GM10248 (cell line): ENCODE measurements at regions of chr21 and their contacts with region 1.

Region 1: DNA sequence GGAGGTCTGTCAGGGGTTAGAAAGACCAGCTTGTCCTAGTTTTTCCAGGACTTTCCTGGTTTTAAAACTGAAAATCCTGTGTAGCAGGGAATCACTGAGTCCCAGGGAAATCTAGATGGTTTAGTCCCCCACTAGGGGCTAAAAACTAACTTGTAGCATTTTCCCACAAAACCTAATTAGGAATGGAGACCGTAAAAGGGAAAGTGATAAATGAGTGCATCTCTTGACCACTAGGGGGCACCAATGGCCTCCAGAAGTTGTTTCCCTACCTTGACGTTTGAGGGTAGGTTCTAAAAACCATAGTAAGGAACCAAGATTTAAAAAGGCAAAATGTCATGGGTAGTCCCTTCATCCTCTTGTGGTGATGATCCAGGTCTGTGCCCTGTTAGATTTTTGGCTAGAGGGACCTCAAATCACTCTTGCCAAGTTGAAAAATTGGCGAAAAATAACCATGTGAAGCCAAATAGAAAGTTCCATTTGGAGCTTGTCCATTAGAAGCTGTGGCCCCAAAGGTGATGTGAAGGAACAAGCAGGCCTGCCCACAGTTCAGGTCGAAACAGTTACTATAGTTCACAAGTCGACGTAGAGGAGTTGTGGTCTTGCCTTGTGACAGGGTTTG is 24.5 kb downstream of the CLIC6 start:
- DNase-seq: peak; percentile 57
- CTCF ChIP-seq: peak; percentile 58

Region 2: DNA sequence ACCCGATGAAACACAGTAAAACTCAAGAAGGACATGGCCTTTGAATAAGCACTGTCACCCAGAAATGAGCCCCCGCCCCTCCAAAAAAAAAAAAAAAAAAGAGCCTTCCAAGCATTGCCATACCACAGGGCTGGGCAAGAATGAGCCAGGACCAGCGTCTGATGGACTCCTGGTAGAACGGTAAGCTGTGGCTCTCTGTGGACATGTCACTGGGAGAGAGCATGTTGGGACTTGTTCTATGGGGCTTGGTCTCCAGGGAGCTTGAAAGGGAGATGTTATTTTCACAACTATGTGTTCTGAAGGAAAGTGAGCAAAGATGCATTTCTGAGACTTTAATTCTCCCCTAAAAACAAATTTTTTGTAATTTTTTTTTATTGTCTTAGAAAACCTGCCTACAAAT is 18.1 kb before region 1 on chr21:
- CTCF ChIA-PET with region 1: interaction called, 13 read pairs
- POLR2A ChIA-PET with region 1: no interaction called
- DNase-seq: no peak
- CTCF ChIP-seq: no peak

Region 3: GRCh38 chr21:34707876-34708325 is 14.6 kb after region 1 on chr21:
- CTCF ChIA-PET with region 1: interaction called, 49 read pairs
- POLR2A ChIA-PET with region 1: no interaction called
- DNase-seq: peak; percentile 81
- CTCF ChIP-seq: no peak

Region 4: GRCh38 chr21:34722684-34723300 is 29.5 kb after region 1 on chr21:
- CTCF ChIA-PET with region 1: interaction called, 10 read pairs
- POLR2A ChIA-PET with region 1: no interaction called
- DNase-seq: peak; percentile 58
- CTCF ChIP-seq: peak; percentile 58

Region 5: DNA sequence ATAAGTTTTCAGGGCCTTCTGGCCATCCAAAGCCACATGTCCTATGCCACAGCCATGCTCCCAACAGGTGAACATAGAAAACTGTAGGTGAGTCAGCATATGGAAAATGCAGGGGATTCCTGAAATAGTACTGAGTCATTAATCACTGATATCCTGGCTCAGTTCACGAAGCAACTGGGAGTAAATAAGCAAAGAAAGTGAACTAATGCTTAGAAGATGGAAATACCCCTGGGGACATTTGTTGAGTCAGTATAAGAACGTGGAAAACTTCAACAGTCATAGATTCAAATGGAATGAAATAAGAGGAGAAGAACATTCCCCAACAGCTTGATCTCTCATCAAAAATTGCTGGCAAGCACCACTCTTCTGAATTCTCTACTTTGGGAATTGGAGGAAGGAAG is 504.7 kb after region 1 on chr21:
- CTCF ChIA-PET with region 1: no interaction called
- POLR2A ChIA-PET with region 1: no interaction called
- DNase-seq: no peak
- CTCF ChIP-seq: no peak

Region 6: DNA sequence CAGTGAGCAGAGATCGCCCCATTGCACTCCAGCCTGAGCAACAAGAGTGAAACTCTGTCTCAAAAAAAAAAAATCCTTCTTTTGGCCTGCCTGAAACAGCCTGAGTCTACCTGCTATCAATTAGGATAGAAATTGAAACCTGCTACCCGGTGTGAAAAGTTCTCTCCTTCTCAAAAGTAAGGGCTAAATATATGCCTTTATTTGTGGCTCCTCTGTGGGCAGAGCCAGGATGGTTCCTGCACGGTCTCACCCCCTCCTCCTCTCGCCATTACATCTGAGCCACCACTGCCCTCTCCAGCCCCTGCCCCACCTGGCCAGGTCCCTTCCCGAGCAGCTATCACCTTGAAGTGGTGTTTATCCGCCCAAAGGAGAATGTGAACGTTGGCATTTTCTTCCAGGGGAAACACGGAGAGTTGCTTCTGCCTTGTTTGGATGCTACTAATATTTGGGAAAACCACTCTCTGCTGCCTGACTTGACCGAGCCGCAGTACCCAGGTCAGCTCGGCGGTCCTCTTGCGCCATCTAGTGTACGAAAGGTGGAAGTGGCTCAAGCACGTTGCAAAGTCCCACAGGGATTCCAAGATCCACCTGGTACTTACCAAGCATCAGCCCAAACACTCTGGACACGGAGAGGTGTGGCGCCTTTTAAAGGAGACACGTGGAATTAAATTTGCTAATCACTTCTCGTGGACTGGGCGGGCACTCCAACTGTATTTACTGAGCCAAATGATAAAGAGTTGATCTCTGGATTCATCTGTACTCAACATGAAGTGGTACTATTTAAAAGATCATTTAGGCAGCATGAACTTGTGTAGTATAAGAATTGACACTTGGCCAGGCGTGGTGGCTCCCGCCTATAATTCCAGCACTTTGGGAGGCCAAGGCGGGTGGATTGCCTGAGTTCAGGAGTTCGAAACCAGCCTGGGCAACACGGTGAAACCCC is 1335.1 kb after region 1 on chr21:
- CTCF ChIA-PET with region 1: interaction called, 10 read pairs
- POLR2A ChIA-PET with region 1: no interaction called
- DNase-seq: peak; percentile 83
- CTCF ChIP-seq: peak; percentile 96